Transverse colon (tissue), 4 donors: ENCODE measurements at regions of chr6 and their contacts with region 1.

Region 1: DNA sequence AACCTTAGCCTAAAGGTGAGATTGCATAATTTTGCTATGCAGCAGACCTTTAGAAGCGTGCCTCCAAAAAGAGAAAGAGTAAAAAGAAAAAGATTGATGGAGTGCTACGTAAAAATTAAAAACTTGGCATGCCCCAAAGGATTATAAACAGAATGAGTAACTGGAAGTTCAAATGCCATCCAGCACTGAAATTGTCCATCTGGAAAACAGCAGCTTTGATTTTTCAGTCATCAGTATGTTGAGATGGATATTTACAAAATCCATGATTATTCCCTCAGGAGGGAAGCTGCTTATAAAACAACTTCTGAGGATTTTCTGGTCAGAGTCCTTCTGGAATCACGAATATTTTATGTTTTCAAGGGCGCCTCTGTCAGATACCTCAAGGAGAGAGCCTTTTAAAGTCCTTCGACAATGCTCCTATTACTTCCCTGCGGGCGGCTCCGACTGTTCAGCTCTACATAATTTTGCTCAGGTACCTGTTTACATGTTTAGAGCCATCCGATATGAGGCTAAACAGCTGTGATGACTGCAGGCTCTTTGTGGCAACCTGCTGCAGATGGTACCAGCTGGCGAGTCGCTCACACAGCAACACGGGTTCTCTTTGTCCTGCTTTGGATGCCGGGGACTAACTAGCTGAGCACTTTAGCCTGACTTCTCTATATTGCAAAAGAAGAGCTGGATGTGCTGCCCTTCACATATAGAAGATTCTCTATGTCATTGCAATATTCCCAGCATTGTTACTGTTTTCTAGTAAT is 83.3 kb downstream of the RCAN2 start:
- DNase-seq: no peak
- H3K4me3 ChIP-seq: no peak overlapping the region
- H3K27ac ChIP-seq: peak overlapping the region in 2 of 4 donors; percentile 4 to 11
- H3K4me1 ChIP-seq: peaks cover 0 to 7% (median 0%) of the 10 kb centered on the region in 4 donors
- H3K27me3 ChIP-seq: no peaks in the 10 kb centered on the region
- CTCF ChIP-seq: no peak
- EP300 ChIP-seq: no peak
- POLR2A ChIP-seq: no peak

Region 2: GRCh38 chr6:46090115-46091079 is 317.6 kb before region 1 on chr6:
- in situ Hi-C with region 1: loop called (anchors 10 to 25 kb)
- intact Hi-C with region 1: no loop called
- DNase-seq: peak; percentile 66
- H3K4me3 ChIP-seq: no peak overlapping the region
- H3K27ac ChIP-seq: no peak overlapping the region
- H3K4me1 ChIP-seq: no peaks in the 10 kb centered on the region
- H3K27me3 ChIP-seq: no peaks in the 10 kb centered on the region
- CTCF ChIP-seq: peak; percentile 74 to 83 (median 79)
- EP300 ChIP-seq: no peak
- POLR2A ChIP-seq: no peak

Region 3: DNA sequence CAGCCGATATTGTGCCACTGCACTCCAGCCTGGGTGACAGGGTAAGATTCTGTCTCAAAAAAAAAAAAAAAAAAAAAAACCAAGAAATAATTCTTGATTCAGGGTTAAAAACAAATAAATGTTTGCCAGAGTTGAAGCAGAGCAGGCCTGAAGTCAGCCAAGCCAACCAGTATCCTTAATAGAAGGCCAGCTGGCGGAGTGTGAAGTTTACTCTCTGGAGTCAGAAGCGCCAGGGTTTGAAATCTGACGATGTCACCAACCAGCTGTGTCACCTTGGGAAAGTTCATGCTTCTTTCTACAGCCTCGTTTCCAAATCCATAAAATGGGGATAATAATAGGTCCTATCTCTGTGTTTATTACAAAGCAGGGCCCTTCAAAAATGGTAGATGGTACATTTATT is 164.2 kb before region 1 on chr6:
- in situ Hi-C with region 1: loop called in 2 of 4 experiments (anchors 10 kb)
- intact Hi-C with region 1: no loop called
- DNase-seq: no peak
- H3K4me3 ChIP-seq: no peak overlapping the region
- H3K27ac ChIP-seq: no peak overlapping the region
- H3K4me1 ChIP-seq: no peaks in the 10 kb centered on the region
- H3K27me3 ChIP-seq: no peaks in the 10 kb centered on the region
- CTCF ChIP-seq: no peak
- EP300 ChIP-seq: no peak
- POLR2A ChIP-seq: no peak